Activated CD4-positive, alpha-beta T cell treated with anti-CD3 and anti-CD28 coated beads for 36 hours (primary cell): ENCODE measurements at regions of chr4 and their contacts with region 1.

Region 1: DNA sequence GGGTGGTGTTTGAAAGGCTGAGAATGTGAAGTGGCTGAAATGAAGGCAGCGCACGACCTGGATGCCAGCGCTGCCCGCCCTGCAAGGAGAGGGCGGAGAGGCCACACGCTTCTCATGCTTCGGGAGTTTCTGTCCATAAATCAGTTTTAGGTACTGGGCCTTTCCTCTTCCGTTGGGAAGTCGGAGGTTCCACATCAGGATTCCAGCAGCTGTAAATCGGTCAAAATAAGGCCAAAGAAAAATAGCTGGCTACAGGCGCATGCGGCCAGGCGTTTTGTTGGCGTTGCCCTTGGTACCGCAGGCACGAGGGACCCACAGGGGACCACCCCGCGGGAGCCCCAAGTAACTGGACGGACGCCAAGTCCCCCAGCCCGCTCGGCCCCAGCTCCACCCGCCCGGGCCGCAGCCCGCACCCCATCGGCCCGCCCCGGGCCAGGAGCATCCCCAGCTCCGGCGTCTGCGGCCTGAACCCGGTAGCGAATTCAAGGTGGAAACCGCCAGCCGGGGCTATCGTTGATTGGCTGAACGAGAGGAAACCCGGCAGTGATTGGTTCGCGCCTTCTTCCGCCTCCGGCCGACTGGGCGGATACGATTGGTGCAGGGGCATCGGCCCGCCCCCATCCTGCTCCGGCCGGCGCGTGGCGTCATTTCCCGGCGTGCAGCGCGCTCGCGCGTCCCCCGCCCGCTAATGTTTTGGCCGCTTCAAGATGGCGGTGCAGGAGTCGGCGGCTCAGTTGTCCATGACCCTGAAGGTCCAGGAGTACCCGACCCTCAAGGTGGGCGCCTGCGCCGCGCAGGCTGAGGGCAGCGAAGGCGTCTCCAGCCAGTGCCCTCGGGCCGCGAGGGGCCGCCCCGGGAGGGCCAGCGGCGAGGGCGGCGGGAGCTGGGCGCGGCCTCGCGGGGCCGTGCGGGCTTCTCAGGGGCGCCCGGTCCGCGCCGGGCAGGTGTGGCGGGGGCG is at the start of gene MAEA:
- DNase-seq: peak; percentile 99
- ATAC-seq: peak; percentile 98
- H3K4me3 Mint-ChIP-seq: peak within 1 kb of the TSS; percentile 95
- H3K27ac Mint-ChIP-seq: peak within 1 kb of the TSS; percentile 87
- H3K4me1 Mint-ChIP-seq: peaks cover 41% of the 10 kb centered on the region
- H3K27me3 Mint-ChIP-seq: no peaks in the 10 kb centered on the region
- total RNA-seq, gene MAEA: 38.9 to 40.4 TPM

Region 2: DNA sequence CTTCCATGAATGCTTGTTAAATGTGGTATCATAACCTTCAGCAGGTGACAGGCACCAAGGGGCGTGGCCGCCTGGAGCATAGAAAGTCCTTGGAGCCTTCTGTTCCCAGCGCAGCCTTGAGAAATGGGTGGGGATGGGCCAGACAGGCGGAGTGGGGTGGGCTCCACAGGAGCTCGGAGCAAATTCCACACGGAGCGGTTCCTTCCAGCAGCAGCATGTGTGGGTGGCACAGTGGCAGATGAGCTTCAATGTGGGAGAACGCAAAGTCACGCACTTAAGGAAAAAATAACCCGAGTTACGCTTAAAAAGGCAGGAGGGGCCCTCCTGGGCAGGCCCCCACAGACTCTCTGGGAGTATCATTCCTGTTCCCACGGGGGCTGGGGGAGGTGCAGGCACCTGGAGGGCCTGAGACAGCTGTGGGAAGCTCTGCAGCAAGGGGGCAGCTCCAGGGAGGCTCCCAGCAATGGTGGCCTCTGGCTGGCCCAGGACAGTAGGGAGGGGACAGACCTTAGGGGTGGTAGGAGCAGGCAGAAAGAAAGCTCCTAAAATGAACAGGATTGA is 728.7 kb before region 1 on chr4:
- CTCF ChIA-PET with region 1: no interaction called
- POLR2A ChIA-PET with region 1: no interaction called
- intact Hi-C with region 1: no loop called
- DNase-seq: no peak
- ATAC-seq: no peak
- H3K4me3 Mint-ChIP-seq: no peak overlapping the region
- H3K27ac Mint-ChIP-seq: no peak overlapping the region
- H3K4me1 Mint-ChIP-seq: no peaks in the 10 kb centered on the region
- H3K27me3 Mint-ChIP-seq: peaks cover 3% of the 10 kb centered on the region

Region 3: DNA sequence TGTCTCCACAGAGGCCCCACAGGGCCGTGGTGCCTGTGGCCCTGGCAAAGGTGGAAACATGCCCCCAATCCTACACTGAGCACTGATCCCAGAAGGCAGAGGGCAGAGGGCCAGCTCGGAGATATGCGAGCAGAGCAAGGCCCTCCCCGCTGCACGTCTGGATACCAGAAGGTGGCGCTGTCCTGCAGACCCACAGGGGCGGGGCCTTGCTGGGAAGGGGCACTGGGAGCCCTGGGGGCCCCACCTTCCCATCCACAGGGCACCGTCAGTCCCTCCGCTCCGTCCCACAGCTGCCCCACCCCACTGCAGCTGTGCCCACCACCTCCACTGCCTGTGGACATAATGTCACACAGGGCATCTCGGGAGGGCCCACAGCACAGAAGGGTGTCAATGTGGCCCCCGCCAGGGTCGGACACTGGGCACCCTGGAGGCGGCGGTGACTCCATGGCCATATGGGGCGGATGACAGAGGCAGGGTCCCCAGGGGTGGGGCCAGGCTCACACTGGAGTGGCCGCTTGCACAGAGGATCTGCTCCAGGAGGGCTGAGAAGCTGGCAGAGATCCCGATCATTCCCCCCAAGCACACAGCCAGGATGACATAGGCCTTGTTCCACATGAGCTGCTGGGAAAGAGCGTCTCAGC is 605.4 kb before region 1 on chr4:
- CTCF ChIA-PET with region 1: no interaction called
- POLR2A ChIA-PET with region 1: no interaction called
- intact Hi-C with region 1: loop called in 1 of 2 experiments (anchors 5 kb)
- DNase-seq: peak; percentile 72
- ATAC-seq: peak; percentile 45
- H3K4me3 Mint-ChIP-seq: no peak overlapping the region
- H3K27ac Mint-ChIP-seq: no peak overlapping the region
- H3K4me1 Mint-ChIP-seq: peaks cover 4% of the 10 kb centered on the region
- H3K27me3 Mint-ChIP-seq: peaks cover 5% of the 10 kb centered on the region

Region 4: DNA sequence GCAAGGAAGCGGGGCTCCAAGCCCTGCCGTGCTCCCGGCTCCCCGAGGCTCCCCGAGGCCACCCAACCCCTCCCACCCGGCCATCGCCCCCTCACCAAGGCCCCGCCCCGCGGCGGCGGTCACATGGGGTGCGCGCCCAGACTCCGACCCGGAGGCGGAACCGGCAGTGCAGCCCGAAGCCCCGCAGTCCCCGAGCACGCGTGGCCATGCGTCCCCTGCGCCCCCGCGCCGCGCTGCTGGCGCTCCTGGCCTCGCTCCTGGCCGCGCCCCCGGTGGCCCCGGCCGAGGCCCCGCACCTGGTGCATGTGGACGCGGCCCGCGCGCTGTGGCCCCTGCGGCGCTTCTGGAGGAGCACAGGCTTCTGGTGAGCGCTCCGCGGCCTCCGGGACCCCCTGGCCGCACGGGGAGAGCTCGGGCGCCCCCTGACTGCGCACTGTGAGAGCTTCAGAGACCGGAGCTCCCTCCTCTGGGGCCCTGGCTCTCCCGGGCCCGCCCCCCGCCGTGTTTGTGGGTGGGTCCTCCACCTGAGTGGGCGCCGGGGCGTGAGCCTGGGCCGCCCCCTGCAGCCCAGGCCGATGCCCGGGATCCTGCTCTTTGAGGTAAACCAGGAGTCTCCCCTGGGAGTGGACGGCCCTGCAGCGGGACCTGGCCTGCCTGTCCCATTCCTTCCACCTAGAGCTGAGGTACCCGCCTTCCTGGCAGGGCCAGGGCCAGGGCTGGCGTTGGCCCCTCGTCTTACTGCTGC is 302.4 kb before region 1 on chr4 and contains the start of gene IDUA:
- CTCF ChIA-PET with region 1: no interaction called
- POLR2A ChIA-PET with region 1: no interaction called
- intact Hi-C with region 1: no loop called
- DNase-seq: peak; percentile 93
- ATAC-seq: peak; percentile 82
- H3K4me3 Mint-ChIP-seq: peak within 1 kb of the TSS; percentile 85
- H3K27ac Mint-ChIP-seq: peak within 1 kb of the TSS; percentile 88
- H3K4me1 Mint-ChIP-seq: peaks cover 13% of the 10 kb centered on the region
- H3K27me3 Mint-ChIP-seq: no peaks in the 10 kb centered on the region
- total RNA-seq, gene IDUA: 6.4 to 9.0 TPM

Region 5: DNA sequence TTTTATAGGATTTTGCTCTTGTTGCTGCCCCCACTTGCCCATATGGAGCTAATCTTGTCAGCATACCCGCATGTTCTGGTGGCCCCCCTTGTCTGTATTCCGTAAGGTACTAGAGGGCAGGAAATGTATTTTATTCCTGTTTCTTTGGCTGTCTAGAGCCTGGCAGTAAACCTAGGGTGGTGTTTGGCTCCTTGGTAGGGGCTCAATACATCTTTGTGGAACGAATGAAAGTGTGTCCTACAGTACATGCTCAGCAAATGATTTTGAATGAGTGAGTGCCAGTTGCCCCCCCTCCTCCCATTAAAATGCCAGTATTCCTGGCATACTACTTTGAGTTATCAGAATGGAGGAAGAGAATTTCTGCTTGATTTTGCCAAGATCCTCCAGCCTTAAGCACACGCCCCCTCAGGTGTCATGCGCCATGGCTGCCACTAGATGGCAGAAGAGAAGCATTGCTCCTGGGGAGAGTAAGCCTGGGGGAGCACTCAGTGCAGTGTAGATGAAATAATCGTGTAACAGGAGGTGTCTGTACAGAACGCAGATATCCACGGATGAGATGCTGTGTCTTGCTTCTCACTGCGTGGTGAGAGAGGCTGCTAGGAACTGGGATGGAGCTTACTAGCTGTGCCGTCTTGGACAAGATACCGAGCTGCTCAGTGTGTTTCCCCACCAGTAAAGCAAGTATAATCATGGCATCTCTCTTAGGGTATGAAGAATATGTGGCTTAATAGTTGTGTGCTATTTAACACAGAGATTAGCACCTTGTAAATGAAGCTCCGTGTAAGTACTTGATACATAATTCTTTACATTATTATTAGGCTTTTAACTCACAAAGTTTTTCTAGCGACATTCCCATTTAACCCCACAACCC is 158.9 kb before region 1 on chr4:
- CTCF ChIA-PET with region 1: interaction called, 6 read pairs
- POLR2A ChIA-PET with region 1: no interaction called
- intact Hi-C with region 1: loop called (anchors 1 to 5 kb)
- DNase-seq: peak; percentile 83
- ATAC-seq: peak; percentile 99
- H3K4me3 Mint-ChIP-seq: no peak overlapping the region
- H3K27ac Mint-ChIP-seq: no peak overlapping the region
- H3K4me1 Mint-ChIP-seq: no peaks in the 10 kb centered on the region
- H3K27me3 Mint-ChIP-seq: peaks cover 2% of the 10 kb centered on the region

Region 6: GRCh38 chr4:1200425-1201035 is 89.0 kb before region 1 on chr4:
- CTCF ChIA-PET with region 1: no interaction called
- POLR2A ChIA-PET with region 1: no interaction called
- intact Hi-C with region 1: loop called in 1 of 2 experiments (anchors 1 kb)
- DNase-seq: peak; percentile 51
- ATAC-seq: no peak
- H3K4me3 Mint-ChIP-seq: peak overlapping the region; percentile 74
- H3K27ac Mint-ChIP-seq: peak overlapping the region; percentile 73
- H3K4me1 Mint-ChIP-seq: peaks cover 40% of the 10 kb centered on the region
- H3K27me3 Mint-ChIP-seq: no peaks in the 10 kb centered on the region

Region 7: GRCh38 chr4:1266881-1267763 is 22.4 kb before region 1 on chr4:
- CTCF ChIA-PET with region 1: interaction called, 5 read pairs
- POLR2A ChIA-PET with region 1: no interaction called
- intact Hi-C with region 1: loop called (anchors 1 to 2 kb)
- DNase-seq: peak; percentile 29
- ATAC-seq: peak; percentile 71
- H3K4me3 Mint-ChIP-seq: peak overlapping the region; percentile 63
- H3K27ac Mint-ChIP-seq: peak overlapping the region; percentile 90
- H3K4me1 Mint-ChIP-seq: peaks cover 13% of the 10 kb centered on the region
- H3K27me3 Mint-ChIP-seq: no peaks in the 10 kb centered on the region

Region 8: DNA sequence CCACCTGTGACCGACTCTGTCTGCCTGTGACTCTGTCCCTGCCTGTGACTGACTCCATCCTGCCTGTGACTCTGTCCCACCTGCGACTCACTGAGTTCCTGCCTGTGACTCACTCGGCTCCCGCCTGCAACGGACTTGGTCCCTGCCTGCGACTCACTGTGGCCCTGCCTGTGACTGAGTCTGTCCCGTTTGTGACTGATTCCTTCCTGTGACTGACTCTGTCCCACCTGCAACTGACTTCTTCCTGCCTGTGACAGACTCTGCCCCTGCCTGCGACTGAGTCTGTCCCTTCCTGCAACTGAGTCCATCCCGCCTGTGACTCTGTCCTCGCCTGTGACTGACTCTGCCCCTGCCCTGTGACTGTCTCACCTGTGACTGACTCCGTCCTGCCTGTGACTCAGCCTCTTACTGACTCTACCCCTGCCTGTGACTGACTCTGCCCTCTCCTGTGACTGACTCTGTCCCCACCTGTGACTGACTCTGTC is 47.9 kb after region 1 on chr4:
- CTCF ChIA-PET with region 1: interaction called, 5 read pairs
- POLR2A ChIA-PET with region 1: no interaction called
- intact Hi-C with region 1: loop called in 1 of 2 experiments (anchors 2 kb)
- DNase-seq: peak; percentile 89
- ATAC-seq: peak; percentile 92
- H3K4me3 Mint-ChIP-seq: no peak overlapping the region
- H3K27ac Mint-ChIP-seq: peak overlapping the region; percentile 78
- H3K4me1 Mint-ChIP-seq: peaks cover 41% of the 10 kb centered on the region
- H3K27me3 Mint-ChIP-seq: no peaks in the 10 kb centered on the region

Region 9: GRCh38 chr4:1351854-1352633 is 62.6 kb after region 1 on chr4:
- CTCF ChIA-PET with region 1: interaction called, 8 read pairs
- POLR2A ChIA-PET with region 1: interaction called, 9 read pairs
- intact Hi-C with region 1: loop called in 1 of 2 experiments (anchors 1 kb)
- DNase-seq: peak; percentile 95
- ATAC-seq: peak; percentile 50
- H3K4me3 Mint-ChIP-seq: no peak overlapping the region
- H3K27ac Mint-ChIP-seq: peak overlapping the region; percentile 83
- H3K4me1 Mint-ChIP-seq: peaks cover 31% of the 10 kb centered on the region
- H3K27me3 Mint-ChIP-seq: no peaks in the 10 kb centered on the region

Region 10: GRCh38 chr4:1427010-1427409 is 137.5 kb after region 1 on chr4:
- CTCF ChIA-PET with region 1: no interaction called
- POLR2A ChIA-PET with region 1: no interaction called
- intact Hi-C with region 1: no loop called
- DNase-seq: no peak
- ATAC-seq: no peak
- H3K4me3 Mint-ChIP-seq: no peak overlapping the region
- H3K27ac Mint-ChIP-seq: no peak overlapping the region
- H3K4me1 Mint-ChIP-seq: no peaks in the 10 kb centered on the region
- H3K27me3 Mint-ChIP-seq: peaks cover 8% of the 10 kb centered on the region

Region 11: GRCh38 chr4:2402029-2402428 is 1112.5 kb after region 1 on chr4:
- CTCF ChIA-PET with region 1: no interaction called
- POLR2A ChIA-PET with region 1: no interaction called
- intact Hi-C with region 1: no loop called
- DNase-seq: peak; percentile 50
- ATAC-seq: peak; percentile 64
- H3K4me3 Mint-ChIP-seq: peak overlapping the region; percentile 54
- H3K27ac Mint-ChIP-seq: peak overlapping the region; percentile 31
- H3K4me1 Mint-ChIP-seq: peaks cover 27% of the 10 kb centered on the region
- H3K27me3 Mint-ChIP-seq: no peaks in the 10 kb centered on the region